ENCODE measurements at regions of chr1 and their contacts with region 1.

Region 1: GRCh38 chr1:183444243-183444642 is 26.1 kb upstream of the NMNAT2 start:
- DNase-seq: no peak
- H3K4me3 ChIP-seq: no peak overlapping the region
- H3K27ac ChIP-seq: no peak overlapping the region
- H3K4me1 ChIP-seq: no peaks in the 10 kb centered on the region
- CTCF ChIP-seq: no peak

Region 2: DNA sequence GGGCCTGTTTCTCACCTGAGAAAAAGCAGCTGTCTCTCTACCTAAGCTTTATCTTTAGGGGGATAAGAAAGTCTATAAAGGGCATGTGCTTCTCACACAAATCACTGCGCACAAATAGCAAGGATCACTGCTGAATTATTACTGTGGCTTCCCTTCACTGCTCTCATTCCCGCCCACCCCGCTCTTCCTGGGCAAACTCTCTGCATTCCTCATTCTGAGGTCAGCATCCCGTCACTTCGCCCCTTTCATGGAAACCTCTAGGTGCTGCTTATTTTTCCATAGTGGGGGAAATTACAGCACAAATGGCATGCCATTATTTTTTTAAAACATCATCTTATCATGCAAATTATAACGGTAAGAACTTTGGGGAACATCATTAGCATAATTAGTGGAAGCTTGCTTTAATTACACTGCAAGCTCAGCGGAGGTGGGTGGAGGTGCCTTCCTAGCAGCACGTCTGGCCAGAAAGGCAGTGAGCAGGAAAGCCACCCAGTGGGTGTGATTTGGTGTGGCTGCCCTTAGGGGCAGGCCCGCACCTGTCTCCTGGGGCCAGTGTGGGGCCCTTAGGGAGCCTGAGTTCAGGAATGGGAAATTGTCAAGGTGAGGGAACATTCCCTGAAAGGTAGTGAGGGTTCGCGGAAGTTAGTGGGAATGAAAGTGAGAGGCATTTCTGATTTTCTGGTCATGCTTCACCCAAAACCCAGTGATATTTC is 152.3 kb before region 1 on chr1:
- CTCF ChIA-PET with region 1: no interaction called
- POLR2A ChIA-PET with region 1: no interaction called
- intact Hi-C with region 1: loop called (anchors 10 kb)
- DNase-seq: no peak
- H3K4me3 ChIP-seq: no peak overlapping the region
- H3K27ac ChIP-seq: no peak overlapping the region
- H3K4me1 ChIP-seq: no peaks in the 10 kb centered on the region
- CTCF ChIP-seq: no peak

Region 3: DNA sequence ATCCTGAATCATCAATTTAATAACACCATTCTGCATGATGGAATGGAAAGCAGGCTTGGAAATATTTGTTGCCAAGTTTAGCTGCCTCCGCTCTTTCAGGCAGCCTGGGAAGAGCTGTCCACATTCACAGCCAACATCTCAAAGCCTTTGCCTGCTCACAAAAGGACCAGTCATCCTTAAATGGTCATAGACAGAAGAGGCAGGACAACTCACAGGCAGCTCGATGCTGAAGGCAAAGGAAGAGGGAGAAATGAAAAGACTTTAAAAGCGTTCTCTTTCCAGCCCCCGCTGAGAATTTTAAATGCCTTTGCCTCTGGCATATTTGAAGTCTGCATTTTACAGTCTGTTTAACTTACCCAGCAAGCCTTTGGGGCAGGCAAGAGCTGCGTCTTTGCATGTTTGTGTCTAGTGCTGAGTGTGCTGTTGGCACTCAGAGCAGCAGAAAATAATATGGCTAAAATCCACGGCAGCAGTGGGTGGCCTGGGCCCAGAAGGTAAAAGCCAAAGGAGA is 95.0 kb before region 1 on chr1:
- CTCF ChIA-PET with region 1: no interaction called
- POLR2A ChIA-PET with region 1: no interaction called
- intact Hi-C with region 1: no loop called
- DNase-seq: no peak
- H3K4me3 ChIP-seq: no peak overlapping the region
- H3K27ac ChIP-seq: no peak overlapping the region
- H3K4me1 ChIP-seq: no peaks in the 10 kb centered on the region
- CTCF ChIP-seq: no peak

Measured in OCI-LY7 (cell line).